ENCODE measurements at regions of chr17 and their contacts with region 1.

Region 1: GRCh38 chr17:72515291-72516065 is 394.7 kb downstream of the SOX9 start:
- DNase-seq: no peak
- H3K4me3 ChIP-seq: no peak overlapping the region
- H3K27ac ChIP-seq: no peak overlapping the region
- H3K4me1 ChIP-seq: peaks cover 2% of the 10 kb centered on the region
- H3K27me3 ChIP-seq: no peaks in the 10 kb centered on the region
- CTCF ChIP-seq: no peak

Region 2: DNA sequence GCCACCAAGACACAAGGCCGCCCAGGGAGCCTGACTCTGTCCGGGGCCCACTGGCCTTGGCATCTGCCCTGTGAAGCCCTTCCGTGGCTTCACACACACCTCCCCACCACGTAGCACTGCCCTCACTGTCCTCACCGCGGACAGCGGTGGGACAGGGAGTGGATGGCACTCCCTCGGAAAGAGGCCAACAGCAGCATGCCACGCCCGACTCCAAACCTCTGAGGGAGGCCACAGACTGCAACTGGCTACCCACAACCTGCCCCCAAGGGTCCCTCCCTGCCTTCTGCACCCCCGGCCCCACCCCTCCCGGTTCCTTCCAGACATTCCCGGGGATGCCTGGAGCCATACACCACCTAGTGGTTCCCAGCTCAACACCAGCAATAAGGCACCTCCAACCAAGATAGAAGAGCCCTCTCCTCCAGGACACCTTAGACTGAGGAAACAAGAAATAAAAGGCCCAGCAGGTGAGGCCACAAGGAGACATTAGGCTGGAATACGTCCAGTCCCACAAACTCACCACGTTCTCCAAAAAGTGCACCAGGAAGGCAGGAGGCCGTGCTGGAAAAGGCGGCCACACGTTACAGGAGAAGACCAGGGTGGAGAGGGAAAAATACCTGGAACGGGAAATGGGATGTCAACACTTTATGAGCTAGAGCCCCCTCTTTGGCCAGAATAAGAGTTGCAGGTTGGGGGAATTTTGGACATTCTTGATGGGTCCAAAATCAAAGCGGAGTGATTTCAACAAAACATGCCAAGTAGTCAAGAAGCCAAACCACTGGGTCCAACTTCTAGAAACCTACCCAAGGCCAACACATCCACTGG is 84.7 kb before region 1 on chr17:
- CTCF ChIA-PET with region 1: no interaction called
- POLR2A ChIA-PET with region 1: no interaction called
- intact Hi-C with region 1: loop called (anchors 5 kb)
- DNase-seq: peak; percentile 50
- H3K4me3 ChIP-seq: no peak overlapping the region
- H3K27ac ChIP-seq: no peak overlapping the region
- H3K4me1 ChIP-seq: peaks cover 20% of the 10 kb centered on the region
- H3K27me3 ChIP-seq: no peaks in the 10 kb centered on the region
- CTCF ChIP-seq: peak; percentile 59

Region 3: DNA sequence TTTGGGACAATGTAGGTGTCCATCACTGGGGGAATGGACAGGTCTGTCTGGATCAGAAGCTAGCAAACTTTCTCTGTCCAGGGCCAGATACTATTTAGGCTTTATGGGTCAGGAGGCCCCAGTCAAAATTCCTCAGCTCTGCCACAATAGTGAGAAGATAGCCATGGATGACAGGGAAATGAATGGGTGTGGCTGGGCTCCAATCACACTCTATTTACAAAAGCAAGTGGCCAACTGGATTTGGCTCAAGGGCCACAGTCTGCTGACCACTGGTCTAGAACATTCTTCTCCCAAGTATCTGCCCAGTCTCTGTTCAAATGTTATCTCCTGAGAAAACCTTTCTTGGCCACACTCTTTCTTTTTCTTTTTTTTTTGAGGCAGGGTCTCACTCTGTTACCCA is 54.8 kb before region 1 on chr17:
- CTCF ChIA-PET with region 1: interaction called, 10 read pairs
- POLR2A ChIA-PET with region 1: no interaction called
- intact Hi-C with region 1: no loop called
- DNase-seq: no peak
- H3K4me3 ChIP-seq: no peak overlapping the region
- H3K27ac ChIP-seq: no peak overlapping the region
- H3K4me1 ChIP-seq: peaks cover 5% of the 10 kb centered on the region
- H3K27me3 ChIP-seq: no peaks in the 10 kb centered on the region
- CTCF ChIP-seq: no peak